Activated naive CD4-positive, alpha-beta T cell treated with anti-CD3 and anti-CD28 coated beads for 36 hours (primary cell): ENCODE measurements at regions of chr12 and their contacts with region 1.

Region 1: DNA sequence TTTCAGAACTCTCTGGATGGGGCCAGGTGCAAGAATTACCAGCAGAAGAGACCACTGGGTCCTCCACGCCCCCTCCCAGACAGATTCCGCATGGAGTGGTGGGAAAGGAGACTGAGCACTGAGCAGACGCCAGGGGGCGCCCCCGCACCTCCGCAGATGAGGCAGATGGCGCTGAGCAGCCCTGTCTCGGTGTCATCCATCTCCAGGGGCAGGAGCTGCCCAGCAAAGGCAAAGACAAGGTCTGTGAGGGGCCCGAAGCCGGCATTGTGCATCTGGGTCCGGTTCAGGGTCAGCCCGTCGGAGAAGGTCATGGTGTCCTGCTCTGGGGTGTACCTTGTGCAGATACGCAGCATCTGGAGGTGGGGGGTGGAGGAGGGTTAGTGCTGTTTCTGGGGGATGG is 6.3 kb upstream of the ITGB7 start:
- DNase-seq: peak; percentile 89
- H3K4me3 Mint-ChIP-seq: no peak overlapping the region
- H3K27ac Mint-ChIP-seq: peak overlapping the region; percentile 33
- H3K4me1 Mint-ChIP-seq: peaks cover 42% of the 10 kb centered on the region
- H3K27me3 Mint-ChIP-seq: no peaks in the 10 kb centered on the region

Region 2: GRCh38 chr12:52774629-52775250 is 438.6 kb before region 1 on chr12:
- CTCF ChIA-PET with region 1: no interaction called
- intact Hi-C with region 1: no loop called
- DNase-seq: no peak
- H3K4me3 Mint-ChIP-seq: no peak overlapping the region
- H3K27ac Mint-ChIP-seq: no peak overlapping the region
- H3K4me1 Mint-ChIP-seq: no peaks in the 10 kb centered on the region
- H3K27me3 Mint-ChIP-seq: no peaks in the 10 kb centered on the region

Region 3: GRCh38 chr12:53047221-53048042 is 165.9 kb before region 1 on chr12:
- CTCF ChIA-PET with region 1: no interaction called
- intact Hi-C with region 1: no loop called
- DNase-seq: peak; percentile 59
- H3K4me3 Mint-ChIP-seq: peak overlapping the region; percentile 9
- H3K27ac Mint-ChIP-seq: no peak overlapping the region
- H3K4me1 Mint-ChIP-seq: peaks cover 26% of the 10 kb centered on the region
- H3K27me3 Mint-ChIP-seq: peaks cover 4% of the 10 kb centered on the region

Region 4: GRCh38 chr12:53200458-53201176 is 12.7 kb before region 1 on chr12:
- CTCF ChIA-PET with region 1: interaction called, 65 read pairs
- intact Hi-C with region 1: no loop called
- DNase-seq: peak; percentile 71
- H3K4me3 Mint-ChIP-seq: peak overlapping the region; percentile 45
- H3K27ac Mint-ChIP-seq: peak overlapping the region; percentile 90
- H3K4me1 Mint-ChIP-seq: peaks cover 74% of the 10 kb centered on the region
- H3K27me3 Mint-ChIP-seq: no peaks in the 10 kb centered on the region

Region 5: GRCh38 chr12:53241623-53242412 is 28.5 kb after region 1 on chr12:
- CTCF ChIA-PET with region 1: interaction called, 42 read pairs
- intact Hi-C with region 1: no loop called
- DNase-seq: no peak
- H3K4me3 Mint-ChIP-seq: no peak overlapping the region
- H3K27ac Mint-ChIP-seq: no peak overlapping the region
- H3K4me1 Mint-ChIP-seq: peaks cover 3% of the 10 kb centered on the region
- H3K27me3 Mint-ChIP-seq: no peaks in the 10 kb centered on the region

Region 6: DNA sequence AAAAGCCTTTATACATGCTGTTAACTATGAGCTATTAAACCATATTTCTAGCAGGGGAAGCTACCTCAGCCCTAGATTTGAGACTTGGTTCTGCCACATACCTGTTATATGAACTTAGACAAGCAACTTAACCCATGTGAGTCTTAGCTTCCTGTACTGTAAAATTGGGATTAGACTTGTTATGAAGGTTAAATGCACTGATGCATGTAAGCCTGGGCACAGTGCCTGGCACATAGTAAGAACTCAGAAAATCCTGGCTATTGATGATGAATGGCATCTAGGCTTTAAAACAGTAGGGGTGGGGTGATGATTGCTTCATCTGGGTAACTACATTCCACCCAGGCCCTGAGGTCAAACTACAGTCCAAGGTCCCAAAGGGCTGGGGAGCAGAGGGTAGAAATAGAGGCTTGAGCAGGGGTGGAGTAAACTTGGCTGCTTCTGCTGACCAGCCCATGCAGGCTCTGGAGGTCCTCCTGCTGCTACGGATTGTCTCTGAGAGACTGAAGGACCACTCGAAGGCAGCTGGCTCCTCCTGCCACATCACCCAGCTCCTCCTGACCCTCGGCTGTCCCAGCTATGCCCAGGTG is 66.0 kb after region 1 on chr12:
- CTCF ChIA-PET with region 1: interaction called, 154 read pairs
- intact Hi-C with region 1: no loop called
- DNase-seq: no peak
- H3K4me3 Mint-ChIP-seq: no peak overlapping the region
- H3K27ac Mint-ChIP-seq: no peak overlapping the region
- H3K4me1 Mint-ChIP-seq: no peaks in the 10 kb centered on the region
- H3K27me3 Mint-ChIP-seq: no peaks in the 10 kb centered on the region

Region 7: GRCh38 chr12:53295070-53295890 is 81.9 kb after region 1 on chr12 and contains the start of gene PFDN5:
- CTCF ChIA-PET with region 1: interaction called, 154 read pairs
- intact Hi-C with region 1: loop called (anchors 2 kb)
- DNase-seq: peak; percentile 94
- H3K4me3 Mint-ChIP-seq: peak within 1 kb of the TSS; percentile 98
- H3K27ac Mint-ChIP-seq: peak within 1 kb of the TSS; percentile 95
- H3K4me1 Mint-ChIP-seq: peaks cover 53% of the 10 kb centered on the region
- H3K27me3 Mint-ChIP-seq: no peaks in the 10 kb centered on the region
- total RNA-seq, gene PFDN5: 376 to 383 TPM